Calu3 (cell line): ENCODE measurements at regions of chr1 and their contacts with region 1.

Region 1: DNA sequence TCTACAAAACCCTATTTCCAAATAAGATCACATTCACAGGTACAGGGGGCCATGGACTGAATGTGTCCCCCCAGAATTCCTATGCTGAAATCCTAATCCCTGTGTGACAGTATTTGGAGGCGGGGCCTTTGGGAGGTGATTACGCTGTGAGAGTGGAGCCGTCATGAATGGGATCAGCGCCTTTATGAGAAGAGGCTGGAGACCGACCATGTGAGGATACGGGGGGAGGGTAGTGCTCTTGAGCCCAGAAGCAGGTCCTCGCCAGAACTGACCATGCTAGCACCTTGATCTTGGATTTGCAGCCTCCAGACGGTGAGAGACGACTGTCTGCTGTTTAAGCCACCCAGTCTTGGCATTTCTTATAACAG is 23.8 kb upstream of the KIF26B start:
- DNase-seq: no peak
- H3K4me3 Mint-ChIP-seq: no peak overlapping the region
- H3K27ac Mint-ChIP-seq: no peak overlapping the region
- H3K4me1 Mint-ChIP-seq: no peaks in the 10 kb centered on the region
- H3K27me3 Mint-ChIP-seq: peaks cover 84% of the 10 kb centered on the region
- CTCF ChIP-seq: no peak

Region 2: GRCh38 chr1:245079021-245079609 is 51.9 kb before region 1 on chr1:
- CTCF ChIA-PET with region 1: no interaction called
- intact Hi-C with region 1: loop called (anchors 5 kb)
- DNase-seq: peak; percentile 28
- H3K4me3 Mint-ChIP-seq: no peak overlapping the region
- H3K27ac Mint-ChIP-seq: no peak overlapping the region
- H3K4me1 Mint-ChIP-seq: no peaks in the 10 kb centered on the region
- H3K27me3 Mint-ChIP-seq: no peaks in the 10 kb centered on the region
- CTCF ChIP-seq: peak; percentile 65